ENCODE measurements at regions of chr13 and their contacts with region 1.

Region 1: GRCh38 chr13:72039126-72039525 is 172.1 kb upstream of the DACH1 start:
- DNase-seq: no peak
- H3K4me3 ChIP-seq: no peak overlapping the region
- H3K4me3 Mint-ChIP-seq: no peak overlapping the region
- H3K27ac Mint-ChIP-seq: no peak overlapping the region
- H3K4me1 ChIP-seq: no peaks in the 10 kb centered on the region
- H3K4me1 Mint-ChIP-seq: no peaks in the 10 kb centered on the region
- H3K27me3 ChIP-seq: no peaks in the 10 kb centered on the region
- H3K27me3 Mint-ChIP-seq: peaks cover 9% of the 10 kb centered on the region
- CTCF ChIP-seq: no peak

Region 2: DNA sequence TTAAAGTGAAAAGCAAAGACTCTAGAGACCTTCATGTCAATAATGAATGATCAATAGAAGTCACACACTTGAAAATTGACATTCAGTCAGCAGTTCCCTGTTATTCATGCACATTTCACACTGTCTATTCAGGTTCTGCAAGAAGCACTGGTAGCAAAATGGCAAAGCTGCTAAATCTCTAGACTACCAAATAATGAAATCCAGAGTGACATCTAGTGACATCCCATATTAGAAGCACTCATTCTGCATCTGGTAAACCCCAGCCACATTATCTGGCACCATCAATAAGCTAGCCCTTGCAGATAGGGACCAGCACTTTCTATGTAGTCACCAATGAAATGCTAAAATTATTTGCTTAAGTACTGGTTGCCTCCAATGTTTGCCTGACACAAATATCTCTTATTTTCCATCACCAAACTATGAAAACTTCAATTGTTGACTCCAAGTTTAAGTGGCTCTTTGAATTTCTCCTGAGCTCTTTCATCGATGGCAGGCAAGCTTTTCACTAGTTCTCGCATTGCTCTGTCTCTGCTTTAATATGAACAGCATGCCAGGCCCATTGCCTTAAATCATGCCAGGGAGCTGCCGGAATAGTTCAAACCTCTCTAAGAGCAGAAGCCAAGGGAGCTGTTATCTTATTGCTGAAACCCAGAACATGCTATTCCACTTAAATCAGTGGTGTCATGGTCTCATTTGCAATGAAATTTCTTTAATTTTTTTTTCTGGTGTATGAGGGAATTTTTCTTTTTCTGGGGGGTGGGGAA is 278.4 kb after region 1 on chr13:
- CTCF ChIA-PET with region 1: no interaction called
- POLR2A ChIA-PET with region 1: no interaction called
- intact Hi-C with region 1: no loop called
- DNase-seq: no peak
- H3K4me3 ChIP-seq: no peak overlapping the region
- H3K4me3 Mint-ChIP-seq: no peak overlapping the region
- H3K27ac Mint-ChIP-seq: no peak overlapping the region
- H3K4me1 ChIP-seq: no peaks in the 10 kb centered on the region
- H3K4me1 Mint-ChIP-seq: no peaks in the 10 kb centered on the region
- H3K27me3 ChIP-seq: no peaks in the 10 kb centered on the region; the same call in 1 of the 2 replicates
- H3K27me3 Mint-ChIP-seq: peaks cover 16% of the 10 kb centered on the region
- CTCF ChIP-seq: no peak

Region 3: GRCh38 chr13:72552731-72553130 is 513.6 kb after region 1 on chr13:
- CTCF ChIA-PET with region 1: interaction called, 10 read pairs
- POLR2A ChIA-PET with region 1: no interaction called
- intact Hi-C with region 1: no loop called
- DNase-seq: no peak
- H3K4me3 ChIP-seq: no peak overlapping the region
- H3K4me3 Mint-ChIP-seq: no peak overlapping the region
- H3K27ac Mint-ChIP-seq: no peak overlapping the region
- H3K4me1 ChIP-seq: no peaks in the 10 kb centered on the region
- H3K4me1 Mint-ChIP-seq: no peaks in the 10 kb centered on the region
- H3K27me3 ChIP-seq: no peaks in the 10 kb centered on the region
- H3K27me3 Mint-ChIP-seq: peaks cover 3% of the 10 kb centered on the region
- CTCF ChIP-seq: no peak

Measured in Caco-2 (cell line).